Calu3 (cell line): ENCODE measurements at regions of chrX and their contacts with region 1.

Region 1: DNA sequence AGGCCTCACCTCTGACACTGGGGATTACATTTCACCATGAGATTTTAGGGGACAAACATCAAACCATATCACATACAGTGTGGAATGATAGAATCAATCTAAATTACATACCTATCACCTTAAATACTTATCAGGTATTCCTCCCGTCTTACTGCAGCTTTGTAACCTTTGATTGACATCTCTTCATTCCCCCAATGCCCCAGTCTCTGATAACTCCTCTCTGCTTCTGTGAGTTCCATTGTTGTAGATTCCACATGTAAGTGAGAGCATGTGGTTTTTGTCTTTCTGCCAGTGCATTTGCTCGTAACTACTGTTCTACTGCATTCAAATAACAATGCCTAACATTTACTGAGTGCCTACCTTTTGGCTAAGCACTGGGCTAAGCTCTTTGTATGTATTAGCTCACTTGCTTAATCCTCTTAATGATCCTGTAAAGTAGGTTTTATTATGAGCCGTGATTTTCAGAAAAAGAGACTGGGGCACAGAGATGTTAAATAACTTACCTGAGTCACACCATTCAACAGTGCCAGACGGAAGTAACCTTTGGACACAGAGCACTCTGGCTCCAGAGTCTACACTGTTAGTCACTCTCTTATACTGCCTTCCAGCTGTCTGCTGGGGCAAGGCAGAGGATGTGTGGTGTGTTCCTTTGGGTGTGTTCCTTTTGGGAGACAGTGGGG is 63.7 kb upstream of the ESX1 start:
- DNase-seq: peak; percentile 63
- H3K4me3 Mint-ChIP-seq: peak overlapping the region; percentile 59
- H3K27ac Mint-ChIP-seq: peak overlapping the region; percentile 89
- H3K4me1 Mint-ChIP-seq: peaks cover 48% of the 10 kb centered on the region
- H3K27me3 Mint-ChIP-seq: no peaks in the 10 kb centered on the region
- CTCF ChIP-seq: no peak

Region 2: GRCh38 chrX:104211187-104211586 is 107.3 kb before region 1 on chrX:
- CTCF ChIA-PET with region 1: no interaction called
- intact Hi-C with region 1: no loop called
- DNase-seq: no peak
- H3K4me3 Mint-ChIP-seq: no peak overlapping the region
- H3K27ac Mint-ChIP-seq: no peak overlapping the region
- H3K4me1 Mint-ChIP-seq: no peaks in the 10 kb centered on the region
- H3K27me3 Mint-ChIP-seq: no peaks in the 10 kb centered on the region
- CTCF ChIP-seq: no peak

Region 3: GRCh38 chrX:104335758-104336157 is 17.3 kb after region 1 on chrX:
- CTCF ChIA-PET with region 1: interaction called, 11 read pairs
- intact Hi-C with region 1: no loop called
- DNase-seq: no peak
- H3K4me3 Mint-ChIP-seq: no peak overlapping the region
- H3K27ac Mint-ChIP-seq: no peak overlapping the region
- H3K4me1 Mint-ChIP-seq: peaks cover 16% of the 10 kb centered on the region
- H3K27me3 Mint-ChIP-seq: no peaks in the 10 kb centered on the region
- CTCF ChIP-seq: no peak

Region 4: DNA sequence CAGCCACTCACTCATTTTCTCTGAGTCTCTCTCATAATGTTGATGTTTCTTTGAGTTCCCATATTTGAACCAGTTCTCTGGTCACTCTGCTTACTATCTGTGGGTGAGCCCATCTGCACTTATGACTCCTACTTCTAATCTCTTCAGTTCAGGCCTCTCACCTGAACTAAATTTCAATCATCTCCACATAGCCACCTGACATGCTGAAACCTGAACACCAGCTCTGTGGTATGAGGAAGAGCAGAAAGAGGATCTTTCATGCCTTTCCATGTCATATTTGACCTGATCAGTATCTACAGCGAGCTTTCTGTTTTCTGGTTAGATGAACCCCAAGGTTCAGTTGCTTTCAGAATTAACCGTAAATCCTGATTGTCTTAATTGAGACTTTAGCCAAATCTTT is 58.5 kb after region 1 on chrX:
- CTCF ChIA-PET with region 1: no interaction called
- intact Hi-C with region 1: no loop called
- DNase-seq: no peak
- H3K4me3 Mint-ChIP-seq: no peak overlapping the region
- H3K27ac Mint-ChIP-seq: no peak overlapping the region
- H3K4me1 Mint-ChIP-seq: no peaks in the 10 kb centered on the region
- H3K27me3 Mint-ChIP-seq: peaks cover 15% of the 10 kb centered on the region
- CTCF ChIP-seq: no peak

Region 5: DNA sequence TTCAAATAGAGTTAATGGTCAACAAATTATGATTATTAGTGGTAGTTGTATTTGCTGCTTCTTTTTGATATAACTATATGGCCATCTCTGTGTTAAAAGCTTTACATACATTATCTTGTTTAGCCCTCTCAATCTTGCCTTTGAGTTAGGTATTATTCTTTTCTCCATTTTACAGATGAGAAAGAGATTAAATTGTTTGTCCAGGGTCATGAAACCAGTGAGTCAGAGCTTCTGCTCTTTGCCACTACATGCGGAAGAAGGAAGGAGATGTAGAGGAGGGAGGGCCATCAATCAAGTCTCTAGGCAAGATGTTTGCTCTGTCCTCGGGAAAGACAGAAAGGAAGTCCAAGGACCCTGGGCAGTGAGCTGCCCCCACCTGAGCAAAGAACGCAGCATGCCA is 113.8 kb after region 1 on chrX:
- CTCF ChIA-PET with region 1: no interaction called
- intact Hi-C with region 1: loop called (anchors 1 kb)
- DNase-seq: peak; percentile 55
- H3K4me3 Mint-ChIP-seq: no peak overlapping the region
- H3K27ac Mint-ChIP-seq: peak overlapping the region; percentile 92
- H3K4me1 Mint-ChIP-seq: peaks cover 36% of the 10 kb centered on the region
- H3K27me3 Mint-ChIP-seq: no peaks in the 10 kb centered on the region
- CTCF ChIP-seq: no peak